Activated B cell treated with CpG ODN at 0.5 μM for 24 hours (primary cell): ENCODE measurements at regions of chr2 and their contacts with region 1.

Region 1: DNA sequence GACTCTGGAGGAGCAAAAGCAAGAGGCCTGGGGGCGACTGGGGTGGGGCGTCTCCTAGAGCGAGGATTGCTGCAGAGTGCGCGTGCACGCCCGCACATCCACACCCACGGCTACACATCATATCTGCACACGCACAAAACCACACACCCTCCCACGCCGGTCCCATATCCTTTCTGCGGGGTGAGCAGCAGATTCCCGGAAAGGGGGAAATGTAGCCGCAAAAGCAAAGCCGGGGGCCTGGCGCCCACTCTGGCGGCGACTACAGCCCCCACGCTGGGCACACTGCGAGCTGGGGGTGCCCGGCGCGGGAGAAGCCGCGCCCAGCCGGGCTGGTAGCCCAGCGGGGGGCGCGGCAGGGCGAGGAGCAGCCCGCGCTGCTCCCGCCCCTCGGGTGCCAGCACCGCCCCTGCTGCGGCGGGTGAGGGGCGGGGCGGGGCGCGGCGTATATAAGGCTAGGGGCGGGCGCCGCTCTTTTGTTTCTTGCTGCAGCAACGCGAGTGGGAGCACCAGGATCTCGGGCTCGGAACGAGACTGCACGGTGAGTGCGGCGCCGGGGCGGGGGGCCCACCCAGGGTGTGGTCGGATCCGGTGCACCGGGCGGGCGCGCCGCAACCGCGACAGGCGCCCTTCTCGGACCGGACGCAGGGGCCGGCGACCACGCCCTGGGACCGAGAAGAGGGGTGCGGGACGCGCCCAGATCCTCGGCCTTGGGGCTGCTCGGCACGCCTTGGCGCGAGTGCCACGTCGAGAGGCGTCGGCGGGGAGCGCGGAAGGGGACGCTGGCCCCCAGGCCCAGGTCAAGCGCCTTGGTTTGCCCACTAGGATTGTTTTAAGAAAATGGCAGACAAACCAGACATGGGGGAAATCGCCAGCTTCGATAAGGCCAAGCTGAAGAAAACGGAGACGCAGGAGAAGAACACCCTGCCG is at the start of gene TMSB10:
- DNase-seq: peak; percentile 94
- ATAC-seq: peak; percentile 84
- H3K4me3 Mint-ChIP-seq: peak within 1 kb of the TSS; percentile 93
- H3K27ac Mint-ChIP-seq: peak within 1 kb of the TSS; percentile 87
- H3K4me1 Mint-ChIP-seq: peaks cover 55% of the 10 kb centered on the region
- H3K27me3 Mint-ChIP-seq: no peaks in the 10 kb centered on the region
- CTCF ChIP-seq: no peak
- total RNA-seq, gene TMSB10: 925 and 1,069 TPM in 2 replicates

Region 2: DNA sequence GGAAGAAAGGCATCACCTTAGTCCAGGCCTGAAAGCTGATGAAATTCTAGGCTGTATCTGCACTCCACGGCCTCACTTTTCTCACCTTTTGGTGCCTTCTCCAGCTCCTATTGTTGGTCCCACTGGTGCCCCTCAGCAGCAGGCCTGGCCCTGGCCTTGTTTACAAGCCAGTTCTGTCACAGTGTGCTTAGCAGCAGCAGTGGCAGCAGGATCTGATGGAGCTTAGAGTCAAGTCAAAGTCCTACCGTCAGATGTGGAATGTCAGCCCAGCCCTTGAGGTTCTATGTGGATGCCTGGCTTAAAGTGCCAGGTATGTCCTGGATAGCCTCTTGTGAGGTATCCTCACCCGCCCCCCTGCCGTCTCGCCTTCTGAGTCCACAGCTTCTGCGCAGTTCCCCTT is 727.7 kb before region 1 on chr2:
- CTCF ChIA-PET with region 1: no interaction called
- POLR2A ChIA-PET with region 1: no interaction called
- intact Hi-C with region 1: no loop called
- DNase-seq: no peak
- ATAC-seq: no peak
- H3K4me3 Mint-ChIP-seq: no peak overlapping the region
- H3K27ac Mint-ChIP-seq: no peak overlapping the region
- H3K4me1 Mint-ChIP-seq: no peaks in the 10 kb centered on the region
- H3K27me3 Mint-ChIP-seq: peaks cover 3% of the 10 kb centered on the region
- CTCF ChIP-seq: no peak

Region 3: DNA sequence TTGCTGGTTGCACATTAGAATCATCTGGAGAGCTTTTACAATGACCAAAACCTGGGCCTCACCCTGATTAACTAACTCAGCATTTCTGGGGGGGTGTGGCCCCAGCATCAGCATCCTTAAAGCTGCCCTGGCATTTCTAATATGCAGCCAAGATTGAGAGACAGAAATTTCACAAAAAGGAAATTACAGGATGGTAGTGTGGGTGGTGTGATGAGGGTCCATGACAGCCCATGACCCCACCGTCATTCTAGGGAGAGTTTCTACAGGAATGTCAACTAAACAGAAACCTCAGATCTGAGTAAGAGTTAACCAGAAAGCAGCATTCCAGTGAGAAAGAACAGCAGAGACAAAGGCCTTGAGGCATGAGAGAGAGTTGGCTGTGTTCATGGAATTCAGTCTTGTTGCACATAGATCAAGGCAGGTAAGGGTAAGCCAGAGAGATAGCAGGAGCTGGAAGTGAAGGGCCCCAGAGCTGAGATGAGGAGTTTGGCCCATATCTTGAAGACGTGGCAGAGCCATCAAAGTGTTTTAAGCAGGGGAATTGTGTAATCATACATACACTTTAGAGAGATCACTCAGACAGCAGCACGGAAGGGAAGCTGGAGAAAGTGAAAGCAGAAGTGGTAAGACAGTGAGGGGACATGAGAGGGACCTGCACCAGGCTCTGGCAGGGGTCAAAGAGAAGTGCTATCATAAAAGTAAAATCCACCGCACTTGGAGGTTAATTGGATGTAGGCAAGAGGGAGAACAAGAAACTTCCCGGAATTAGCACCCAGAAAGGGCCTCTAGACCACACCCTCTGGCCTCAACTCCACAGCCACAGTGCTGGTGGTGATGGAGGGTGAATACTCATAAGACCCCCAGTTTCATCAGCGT is 16.8 kb before region 1 on chr2:
- CTCF ChIA-PET with region 1: interaction called, 14 read pairs
- POLR2A ChIA-PET with region 1: interaction called, 82 read pairs
- intact Hi-C with region 1: loop called (anchors 2 kb)
- DNase-seq: peak; percentile 35
- ATAC-seq: peak; percentile 100
- H3K4me3 Mint-ChIP-seq: peak overlapping the region; percentile 77
- H3K27ac Mint-ChIP-seq: peak overlapping the region; percentile 96
- H3K4me1 Mint-ChIP-seq: peaks cover 29% of the 10 kb centered on the region
- H3K27me3 Mint-ChIP-seq: no peaks in the 10 kb centered on the region
- CTCF ChIP-seq: no peak

Region 4: DNA sequence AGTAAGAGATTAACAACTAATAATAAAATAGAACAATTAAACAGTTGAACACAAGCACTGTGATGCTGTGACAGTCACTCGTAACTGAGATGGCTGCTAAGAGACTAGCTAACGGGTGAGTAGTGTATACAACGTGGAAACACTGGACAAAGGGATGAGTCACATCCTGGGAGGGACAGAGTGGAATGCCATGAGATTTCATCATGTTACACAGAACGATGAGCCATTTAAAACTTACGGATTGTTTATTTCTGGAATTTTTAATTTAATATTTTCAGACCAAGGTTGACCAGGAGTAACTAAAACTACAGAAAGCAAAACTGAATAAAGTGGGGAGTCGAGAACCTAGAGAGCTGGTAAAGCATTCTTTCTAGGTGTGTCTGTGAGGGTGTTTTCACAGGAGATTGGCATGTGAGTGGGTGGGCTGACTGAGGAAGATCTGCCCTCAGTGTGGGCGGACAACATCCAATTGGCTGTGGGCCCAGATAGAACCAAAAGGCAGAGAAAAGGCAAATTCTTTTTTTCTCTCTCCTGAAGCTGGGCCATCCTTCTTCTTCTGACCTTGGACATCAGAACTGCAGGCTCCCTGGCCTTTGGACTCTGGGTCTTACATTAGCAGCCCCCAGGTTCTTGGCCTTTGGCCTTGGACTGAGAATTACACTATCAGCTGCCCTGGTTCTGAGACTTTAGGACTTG is 14.6 kb after region 1 on chr2:
- CTCF ChIA-PET with region 1: interaction called, 67 read pairs
- POLR2A ChIA-PET with region 1: interaction called, 326 read pairs
- intact Hi-C with region 1: loop called (anchors 1 kb)
- DNase-seq: no peak
- ATAC-seq: peak; percentile 59
- H3K4me3 Mint-ChIP-seq: peak overlapping the region; percentile 73
- H3K27ac Mint-ChIP-seq: peak overlapping the region; percentile 96
- H3K4me1 Mint-ChIP-seq: peaks cover 63% of the 10 kb centered on the region
- H3K27me3 Mint-ChIP-seq: no peaks in the 10 kb centered on the region
- CTCF ChIP-seq: no peak

Region 5: DNA sequence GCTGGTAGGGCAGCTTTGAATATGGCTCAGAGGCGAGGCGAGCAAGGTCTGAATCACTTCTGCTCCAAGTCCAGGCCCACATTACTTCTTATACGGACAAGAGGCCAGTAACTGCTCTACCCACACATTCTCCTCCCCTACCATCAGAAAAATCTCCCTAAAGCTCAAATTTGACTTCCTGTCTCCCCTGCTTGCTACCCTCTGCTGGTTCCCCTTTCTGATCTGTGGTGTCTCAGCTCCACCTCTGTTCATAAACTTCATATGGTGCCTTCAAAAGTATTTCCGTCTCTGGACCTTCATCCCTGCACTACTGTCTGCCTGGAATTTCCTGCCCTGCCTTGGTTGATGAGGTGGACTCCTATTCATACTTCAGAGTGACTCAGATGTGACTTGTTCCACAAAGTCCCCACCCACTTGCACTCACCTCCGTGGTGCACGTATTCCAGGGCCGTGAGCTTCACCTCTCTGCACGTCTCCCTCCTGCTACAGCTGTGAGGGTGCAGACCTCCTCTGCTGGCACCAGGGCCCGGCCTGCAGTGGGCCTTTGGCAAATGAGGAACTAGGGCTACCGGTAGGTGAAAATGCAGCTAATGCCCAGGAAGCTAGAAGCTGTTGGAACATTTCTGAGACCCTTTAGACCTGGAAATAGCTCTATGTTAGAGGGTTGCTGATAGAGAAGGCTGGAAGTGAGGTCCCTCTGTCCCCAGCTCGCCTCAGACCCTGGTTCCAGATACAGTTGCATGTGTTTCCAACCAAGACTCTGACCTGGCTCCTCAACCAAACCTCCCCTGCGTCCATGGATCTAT is 41.0 kb after region 1 on chr2:
- CTCF ChIA-PET with region 1: no interaction called
- POLR2A ChIA-PET with region 1: interaction called, 81 read pairs
- intact Hi-C with region 1: loop called (anchors 1 kb)
- DNase-seq: peak; percentile 44
- ATAC-seq: peak; percentile 77
- H3K4me3 Mint-ChIP-seq: peak overlapping the region; percentile 72
- H3K27ac Mint-ChIP-seq: peak overlapping the region; percentile 97
- H3K4me1 Mint-ChIP-seq: peaks cover 54% of the 10 kb centered on the region
- H3K27me3 Mint-ChIP-seq: no peaks in the 10 kb centered on the region
- CTCF ChIP-seq: no peak